K562 (cell line): ENCODE measurements at regions of chr22 and their contacts with region 1.

Region 1: DNA sequence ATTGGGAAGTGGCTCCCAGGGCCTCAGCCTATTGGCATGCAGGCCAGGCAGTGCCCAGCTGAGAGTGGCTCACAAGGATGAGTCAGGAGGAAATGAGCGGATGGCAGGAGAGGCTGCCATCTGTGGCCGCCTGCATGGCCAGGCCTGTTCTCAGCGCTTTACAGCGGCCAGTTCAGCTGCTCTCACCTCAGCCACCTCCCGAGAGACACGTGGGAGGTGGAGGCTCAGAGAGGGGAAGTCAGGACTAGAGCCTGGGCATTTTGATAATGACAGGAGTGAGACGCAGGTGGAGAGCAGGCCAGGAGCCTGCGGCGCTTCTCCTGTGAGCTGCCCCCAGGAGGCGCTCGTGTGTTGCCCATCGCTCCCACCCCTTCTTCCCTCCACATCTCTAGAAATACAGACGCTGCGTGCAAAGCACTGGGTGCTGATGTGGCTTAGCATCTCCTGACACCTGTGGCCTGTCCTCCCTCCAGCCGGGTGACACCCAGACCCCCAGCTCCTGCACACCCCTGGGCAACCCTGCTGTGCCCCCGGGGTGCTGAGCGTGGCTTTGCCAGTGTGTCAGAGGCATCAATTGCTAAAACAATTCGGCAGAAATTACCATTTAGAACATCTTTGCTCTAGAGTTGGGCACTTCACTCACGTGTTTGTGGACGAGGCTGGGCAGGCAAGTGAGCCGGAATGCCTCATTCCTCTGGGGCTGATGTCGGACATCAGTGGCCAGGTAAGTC is 21.4 kb upstream of the PANX2 start:
- DNase-seq: peak; percentile 81 to 84 (median 82)
- ATAC-seq: peak; percentile 93
- H3K4me3 ChIP-seq: no peak overlapping the region
- H3K27ac ChIP-seq: no peak overlapping the region
- H3K4me1 ChIP-seq: peaks cover 5 to 54% of the 10 kb centered on the region in 2 experiments; a peak in 4 of 5 replicates
- H3K27me3 ChIP-seq: peaks cover 0 to 29% of the 10 kb centered on the region in 2 experiments; a peak in 3 of 5 replicates
- CTCF ChIP-seq: peak; percentile 88 to 91 (median 89)
- EP300 ChIP-seq: no peak
- POLR2A ChIP-seq: no peak
- RAD21 ChIP-seq: peak; percentile 67 to 88

Region 2: DNA sequence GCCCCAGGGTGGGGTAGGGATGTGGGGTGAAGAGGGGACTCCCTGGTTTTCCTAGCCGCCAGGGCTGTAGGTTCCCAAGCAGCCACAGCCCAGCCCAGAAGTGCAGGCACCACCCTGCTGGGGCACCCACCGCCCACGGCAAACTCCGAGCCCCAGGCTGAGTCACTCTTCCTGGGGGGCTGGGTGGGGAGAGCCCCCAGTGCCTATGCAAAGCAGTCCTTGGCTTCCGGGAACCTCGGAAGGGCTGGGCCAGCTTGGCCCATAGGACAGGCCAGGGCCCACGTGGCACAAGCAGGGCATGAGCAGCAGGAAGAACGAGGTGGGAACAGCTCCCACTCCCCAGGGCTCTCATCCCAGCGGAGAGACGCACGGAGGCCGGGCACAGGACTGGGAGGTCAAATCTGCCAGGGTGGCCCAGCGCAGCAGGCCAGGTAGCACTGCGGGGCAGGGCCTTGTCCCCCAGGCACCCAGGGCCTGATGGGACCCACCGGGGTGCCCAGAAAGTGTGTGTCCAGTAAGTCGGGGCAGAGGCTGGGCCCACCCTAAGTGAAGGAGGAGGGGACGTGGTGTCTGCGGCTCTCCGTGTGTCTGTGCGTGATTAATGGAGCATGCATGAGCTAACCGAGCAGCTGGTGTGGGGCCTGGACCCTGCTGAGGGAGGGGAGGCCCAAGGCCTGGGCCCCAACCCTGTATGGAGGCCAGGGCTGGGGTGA is 132.0 kb before region 1 on chr22:
- CTCF ChIA-PET with region 1: no interaction called
- POLR2A ChIA-PET with region 1: no interaction called
- in situ Hi-C with region 1: no loop called
- intact Hi-C with region 1: no loop called
- DNase-seq: no peak
- ATAC-seq: no peak
- H3K4me3 ChIP-seq: no peak overlapping the region
- H3K27ac ChIP-seq: no peak overlapping the region
- H3K4me1 ChIP-seq: peaks cover 0 to 40% of the 10 kb centered on the region in 2 experiments; a peak in 2 of 5 replicates
- H3K27me3 ChIP-seq: peaks cover 0 to 21% of the 10 kb centered on the region in 2 experiments; a peak in 2 of 5 replicates
- CTCF ChIP-seq: no peak
- EP300 ChIP-seq: no peak
- POLR2A ChIP-seq: no peak
- RAD21 ChIP-seq: no peak

Region 3: DNA sequence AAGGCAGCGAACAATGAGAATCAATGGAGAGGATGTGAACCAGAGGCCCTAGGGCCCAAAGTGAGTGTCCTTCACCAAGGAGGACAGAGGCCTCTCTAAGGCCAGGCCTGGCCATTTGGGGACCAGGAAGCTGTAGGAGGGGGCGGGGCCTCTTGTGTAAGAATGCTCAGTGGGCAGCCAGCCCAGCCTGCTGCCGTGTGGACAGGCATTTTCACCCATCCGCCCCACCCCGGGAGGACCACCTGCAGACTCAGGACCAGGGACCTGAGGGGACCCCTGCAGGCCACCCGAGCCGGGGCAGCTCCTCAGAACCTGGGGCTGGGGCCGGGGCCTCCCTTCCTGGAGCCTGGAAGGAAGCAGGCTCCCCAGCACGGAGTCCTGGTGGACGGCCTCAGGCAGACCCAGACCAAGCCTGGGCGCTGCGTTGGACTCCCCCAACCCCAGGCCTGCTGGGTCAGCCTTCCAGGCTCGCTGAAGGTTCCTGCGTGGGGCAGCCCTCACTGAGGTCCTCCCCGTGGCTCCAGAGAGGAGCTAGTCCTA is 34.9 kb after region 1 on chr22:
- CTCF ChIA-PET with region 1: no interaction called
- POLR2A ChIA-PET with region 1: no interaction called
- in situ Hi-C with region 1: no loop called
- intact Hi-C with region 1: no loop called
- DNase-seq: peak in 1 of 4 experiments; percentile 36
- ATAC-seq: 0 out of 3 replicates have a peak, but pooled peaks have one; percentile 14
- H3K4me3 ChIP-seq: no peak overlapping the region
- H3K27ac ChIP-seq: no peak overlapping the region
- H3K4me1 ChIP-seq: peaks cover 8 to 77% of the 10 kb centered on the region in 2 experiments
- H3K27me3 ChIP-seq: no peaks in the 10 kb centered on the region
- CTCF ChIP-seq: no peak
- EP300 ChIP-seq: no peak
- POLR2A ChIP-seq: no peak
- RAD21 ChIP-seq: no peak

Region 4: GRCh38 chr22:50209893-50210292 is 60.7 kb after region 1 on chr22:
- CTCF ChIA-PET with region 1: interaction called, 12 read pairs
- POLR2A ChIA-PET with region 1: no interaction called
- in situ Hi-C with region 1: loop called (anchors 5 kb)
- intact Hi-C with region 1: loop called (anchors 1 kb)
- DNase-seq: peak; percentile 38 to 72 (median 50)
- ATAC-seq: peak; percentile 89
- H3K4me3 ChIP-seq: no peak overlapping the region
- H3K27ac ChIP-seq: no peak overlapping the region
- H3K4me1 ChIP-seq: peaks cover 0 to 37% of the 10 kb centered on the region in 2 experiments; a peak in 2 of 5 replicates
- H3K27me3 ChIP-seq: no peaks in the 10 kb centered on the region
- CTCF ChIP-seq: peak; percentile 70 to 79 (median 74)
- EP300 ChIP-seq: no peak
- POLR2A ChIP-seq: no peak
- RAD21 ChIP-seq: peak; percentile 39 to 67

Region 5: DNA sequence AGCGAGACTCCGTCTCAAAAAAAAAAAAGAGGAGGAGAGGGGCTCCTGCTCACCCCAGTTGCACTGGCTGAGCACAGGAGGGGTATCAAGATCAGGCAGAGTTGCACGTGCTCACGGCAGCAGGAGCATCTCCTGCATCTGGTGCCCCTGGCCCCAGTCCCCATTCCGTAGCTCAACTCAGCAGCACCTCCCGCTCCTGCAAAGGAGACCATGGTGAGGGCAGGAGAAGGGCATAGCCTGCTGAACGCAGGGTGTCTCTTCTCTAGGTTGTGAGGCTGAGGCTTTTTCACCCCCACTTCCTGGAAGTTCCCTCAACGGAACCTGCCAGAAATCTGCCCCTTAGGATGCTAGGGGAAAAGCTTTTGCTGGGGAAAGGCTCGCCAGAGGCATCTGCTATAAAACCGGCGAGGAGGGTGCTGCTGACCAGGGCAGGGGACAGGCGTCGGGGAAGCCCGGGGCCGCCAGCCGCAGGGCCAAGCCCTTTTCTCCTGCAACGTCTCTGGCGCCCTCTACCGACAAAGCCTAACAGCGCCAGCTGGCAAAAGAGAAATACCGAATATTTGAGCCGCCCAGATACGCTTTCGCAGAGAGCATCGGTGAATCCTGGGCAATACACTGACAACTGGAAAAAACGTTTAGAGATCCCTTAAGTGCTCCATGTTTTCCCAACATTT is 193.0 kb after region 1 on chr22:
- CTCF ChIA-PET with region 1: interaction called, 4 read pairs
- POLR2A ChIA-PET with region 1: no interaction called
- in situ Hi-C with region 1: no loop called
- intact Hi-C with region 1: loop called (anchors 10 kb)
- DNase-seq: peak; percentile 58 to 89 (median 64)
- ATAC-seq: peak; percentile 89
- H3K4me3 ChIP-seq: peak overlapping the region; percentile 77
- H3K27ac ChIP-seq: peak overlapping the region; percentile 86
- H3K4me1 ChIP-seq: peaks cover 3 to 56% of the 10 kb centered on the region in 2 experiments; a peak in 4 of 5 replicates
- H3K27me3 ChIP-seq: no peaks in the 10 kb centered on the region
- CTCF ChIP-seq: peak; percentile 86 to 95 (median 90)
- EP300 ChIP-seq: 0 out of 2 replicates have a peak, but pooled peaks have one; percentile 4
- POLR2A ChIP-seq: no peak
- RAD21 ChIP-seq: peak; percentile 75 to 83

Region 6: GRCh38 chr22:50691521-50691920 is 542.4 kb after region 1 on chr22:
- CTCF ChIA-PET with region 1: interaction called, 4 read pairs
- POLR2A ChIA-PET with region 1: no interaction called
- in situ Hi-C with region 1: no loop called
- intact Hi-C with region 1: loop called (anchors 5 kb)
- DNase-seq: peak in 2 of 4 experiments; percentile 25 to 43
- ATAC-seq: no peak
- H3K4me3 ChIP-seq: no peak overlapping the region
- H3K27ac ChIP-seq: no peak overlapping the region
- H3K4me1 ChIP-seq: peaks cover 0 to 2% of the 10 kb centered on the region in 2 experiments; a peak in 2 of 5 replicates
- H3K27me3 ChIP-seq: peaks cover 9 to 38% of the 10 kb centered on the region in 2 experiments; a peak in 4 of 5 replicates
- CTCF ChIP-seq: peak; percentile 46 to 72 (median 60); a peak in 4 of 6 replicates
- EP300 ChIP-seq: no peak
- POLR2A ChIP-seq: no peak
- RAD21 ChIP-seq: peak; percentile 52 to 69